Panc1 (cell line): ENCODE measurements at regions of chr15 and their contacts with region 1.

Region 1: DNA sequence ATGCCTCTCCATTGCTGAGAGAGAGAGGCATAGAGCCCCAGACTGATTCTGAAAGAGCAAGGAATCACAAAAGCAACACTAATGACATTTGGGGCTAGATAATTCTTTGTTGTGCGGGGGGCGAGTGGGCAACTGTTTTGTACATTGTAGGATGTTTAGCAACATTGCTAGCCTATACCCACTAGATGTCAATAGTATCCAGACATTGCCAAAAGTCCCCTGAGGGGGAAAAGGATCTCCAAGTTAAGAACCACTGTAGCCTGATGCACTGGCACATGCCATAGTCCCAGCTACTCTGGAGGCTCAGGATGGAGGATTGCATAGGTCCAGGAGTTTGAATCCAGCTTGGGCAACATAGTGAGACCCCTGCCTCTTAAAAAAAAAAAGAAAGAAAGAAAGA is 22.8 kb upstream of the GOLM2 start:
- DNase-seq: no peak
- ATAC-seq: no peak
- H3K4me3 ChIP-seq: no peak overlapping the region
- H3K27ac ChIP-seq: no peak overlapping the region
- H3K4me1 ChIP-seq: no peaks in the 10 kb centered on the region
- H3K27me3 ChIP-seq: no peaks in the 10 kb centered on the region; the same call in 1 of the 2 replicates
- CTCF ChIP-seq: no peak

Region 2: DNA sequence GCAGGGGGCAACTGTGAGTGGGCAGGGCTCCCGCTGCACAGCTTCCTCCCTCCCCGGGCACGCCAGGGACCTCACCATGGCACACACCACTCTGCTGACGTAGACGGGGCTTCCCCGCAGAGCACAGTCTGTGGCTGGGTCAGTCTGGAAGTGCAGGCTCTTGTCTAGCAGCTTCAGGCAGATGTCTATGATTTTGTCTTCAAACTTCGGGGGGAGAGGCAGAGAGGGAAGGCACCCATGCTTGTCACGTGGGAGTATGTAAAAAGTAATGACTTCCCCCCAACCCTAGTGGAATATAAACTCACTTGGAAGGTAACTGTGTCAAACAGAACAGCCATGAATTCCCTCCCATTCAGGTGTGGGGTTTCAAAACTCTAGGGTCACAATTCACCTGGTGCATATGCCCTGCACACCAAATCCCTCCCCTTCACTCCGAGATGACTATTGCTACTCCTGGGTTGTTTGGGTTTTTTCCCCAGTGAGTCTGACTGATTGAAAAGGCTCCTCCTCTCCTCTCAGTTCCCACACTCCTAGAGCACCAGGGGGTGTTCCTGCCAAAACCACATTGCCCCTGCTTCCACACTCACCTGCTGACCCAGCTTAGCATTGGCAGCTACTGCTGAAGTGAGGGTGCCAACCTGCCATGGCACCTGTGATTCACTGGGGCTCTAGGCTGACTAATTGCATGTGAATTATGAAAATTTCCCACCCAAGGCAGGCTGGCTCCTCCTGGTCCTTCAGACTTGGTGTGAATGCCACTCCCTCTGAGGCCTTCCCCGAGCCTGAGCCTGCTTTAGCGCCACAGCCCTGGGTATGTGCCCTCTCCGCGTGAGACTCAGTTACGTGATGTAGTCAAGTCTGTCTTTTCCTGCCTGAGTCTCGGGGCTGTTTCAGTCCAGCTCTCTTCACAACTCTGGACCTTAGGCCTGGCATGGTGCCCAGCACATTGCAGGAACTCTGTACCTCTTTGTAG is 1012.0 kb before region 1 on chr15:
- CTCF ChIA-PET with region 1: no interaction called
- POLR2A ChIA-PET with region 1: no interaction called
- in situ Hi-C with region 1: no loop called
- intact Hi-C with region 1: no loop called
- DNase-seq: no peak
- ATAC-seq: no peak
- H3K4me3 ChIP-seq: no peak overlapping the region
- H3K27ac ChIP-seq: no peak overlapping the region
- H3K4me1 ChIP-seq: no peaks in the 10 kb centered on the region
- H3K27me3 ChIP-seq: no peaks in the 10 kb centered on the region; the same call in 1 of the 2 replicates
- CTCF ChIP-seq: no peak

Region 3: GRCh38 chr15:44231842-44232241 is 33.9 kb before region 1 on chr15:
- CTCF ChIA-PET with region 1: no interaction called
- POLR2A ChIA-PET with region 1: interaction called, 14 read pairs
- in situ Hi-C with region 1: no loop called
- intact Hi-C with region 1: no loop called
- DNase-seq: no peak
- ATAC-seq: no peak
- H3K4me3 ChIP-seq: no peak overlapping the region
- H3K27ac ChIP-seq: no peak overlapping the region
- H3K4me1 ChIP-seq: no peaks in the 10 kb centered on the region
- H3K27me3 ChIP-seq: no peaks in the 10 kb centered on the region
- CTCF ChIP-seq: no peak